Activated naive CD4-positive, alpha-beta T cell treated with anti-CD3 and anti-CD28 coated beads for 36 hours (primary cell): ENCODE measurements at regions of chr13 and their contacts with region 1.

Region 1: DNA sequence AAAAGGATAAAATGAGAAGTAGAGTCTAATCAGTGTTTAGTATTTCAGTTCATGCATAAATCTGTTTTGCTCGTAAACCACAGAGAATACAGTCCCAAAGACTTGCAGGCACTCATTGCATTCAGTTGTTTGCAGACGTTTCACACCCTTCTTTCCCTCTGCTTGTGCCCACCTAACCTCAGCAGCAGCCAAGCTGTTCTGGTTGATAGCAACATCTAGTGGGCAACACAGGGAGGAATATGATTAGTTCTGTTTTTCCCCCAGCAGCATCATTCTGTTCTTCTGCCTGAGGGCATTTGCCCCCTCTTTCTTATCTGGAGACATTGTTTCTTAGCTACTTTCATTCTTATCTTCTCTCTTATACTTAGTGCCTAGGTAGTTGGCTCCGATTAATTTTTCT is 135.6 kb downstream of the PAN3 start:
- DNase-seq: no peak
- H3K4me3 Mint-ChIP-seq: no peak overlapping the region
- H3K27ac Mint-ChIP-seq: no peak overlapping the region
- H3K4me1 Mint-ChIP-seq: peaks cover 1% of the 10 kb centered on the region
- H3K27me3 Mint-ChIP-seq: no peaks in the 10 kb centered on the region

Region 2: GRCh38 chr13:28058866-28059624 is 214.9 kb before region 1 on chr13:
- CTCF ChIA-PET with region 1: no interaction called
- intact Hi-C with region 1: loop called (anchors 10 kb)
- DNase-seq: peak; percentile 72
- H3K4me3 Mint-ChIP-seq: no peak overlapping the region
- H3K27ac Mint-ChIP-seq: no peak overlapping the region
- H3K4me1 Mint-ChIP-seq: no peaks in the 10 kb centered on the region
- H3K27me3 Mint-ChIP-seq: peaks cover 3% of the 10 kb centered on the region

Region 3: GRCh38 chr13:28286263-28286662 is 12.3 kb after region 1 on chr13:
- CTCF ChIA-PET with region 1: no interaction called
- intact Hi-C with region 1: no loop called
- DNase-seq: no peak
- H3K4me3 Mint-ChIP-seq: no peak overlapping the region
- H3K27ac Mint-ChIP-seq: no peak overlapping the region
- H3K4me1 Mint-ChIP-seq: no peaks in the 10 kb centered on the region
- H3K27me3 Mint-ChIP-seq: no peaks in the 10 kb centered on the region